ENCODE measurements at regions of chr19 and their contacts with region 1.

Region 1: GRCh38 chr19:57240311-57241090 is at the start of gene ZNF805:
- DNase-seq: peak; percentile 82 to 96 (median 93)
- ATAC-seq: peak; percentile 97
- H3K4me3 ChIP-seq: peak within 1 kb of the TSS; percentile 73
- H3K4me3 Mint-ChIP-seq: peak within 1 kb of the TSS; percentile 88 to 97 (median 94)
- H3K27ac ChIP-seq: peak within 1 kb of the TSS; percentile 95
- H3K27ac Mint-ChIP-seq: peak within 1 kb of the TSS; percentile 96 to 99 (median 97)
- H3K4me1 ChIP-seq: peaks cover 19% of the 10 kb centered on the region in 2 donors
- H3K4me1 Mint-ChIP-seq: peaks cover 20 to 44% (median 36%) of the 10 kb centered on the region in 7 donors
- H3K27me3 ChIP-seq: no peaks in the 10 kb centered on the region
- H3K27me3 Mint-ChIP-seq: peaks cover 0 to 3% (median 0%) of the 10 kb centered on the region in 5 donors
- total RNA-seq, gene ZNF805: 12.0 to 26.2 (median 23.7) TPM

Region 2: DNA sequence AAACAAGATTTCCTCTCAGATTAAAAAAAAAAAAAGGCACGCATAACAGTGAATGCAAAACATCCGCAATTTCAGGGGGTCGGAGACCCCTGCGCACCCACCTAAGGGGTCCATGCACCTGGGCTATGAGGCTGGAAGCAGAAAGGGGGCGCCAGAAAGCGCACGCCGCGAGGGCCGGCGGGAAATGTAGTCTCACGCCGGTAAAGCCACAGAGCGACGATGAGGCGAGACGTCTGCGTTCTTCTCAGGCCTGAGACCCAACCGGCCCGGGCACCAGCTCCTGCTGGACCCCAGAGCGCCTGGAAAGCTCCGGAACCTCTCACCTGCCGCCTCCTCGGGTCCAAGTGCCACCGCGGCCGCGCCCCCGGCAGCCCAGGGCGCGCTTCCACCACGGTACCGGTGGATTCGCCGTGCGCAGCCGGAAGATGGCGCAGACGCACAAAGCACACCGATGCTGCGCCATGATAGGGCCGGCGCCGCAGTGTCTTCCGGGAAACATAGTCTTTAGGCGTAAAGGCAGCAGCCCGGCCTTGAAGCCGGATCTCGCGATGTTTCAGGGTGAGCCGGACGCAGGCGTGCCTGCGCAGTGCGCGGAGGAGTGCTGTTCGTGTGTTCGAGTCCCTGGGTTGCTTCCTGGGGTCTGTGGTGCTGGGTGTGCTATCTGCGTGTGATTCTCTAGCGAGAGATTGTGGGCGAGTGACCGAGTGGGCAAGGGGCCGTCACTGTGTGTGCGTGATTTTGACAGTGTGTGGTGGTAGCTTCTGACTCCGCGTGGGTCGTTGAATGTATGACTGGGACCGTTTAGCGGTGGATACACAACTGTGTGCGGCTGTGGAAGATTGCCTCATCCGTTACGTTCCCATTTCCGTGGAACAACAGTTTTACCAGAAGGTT is 847.1 kb before region 1 on chr19 and contains the start of gene ZNF582:
- CTCF ChIA-PET with region 1: no interaction called
- POLR2A ChIA-PET with region 1: no interaction called
- intact Hi-C with region 1: loop called in 1 of 2 experiments (anchors 1 kb)
- DNase-seq: peak; percentile 79 to 94 (median 90)
- ATAC-seq: peak; percentile 98
- H3K4me3 ChIP-seq: peak within 1 kb of the TSS; percentile 90
- H3K4me3 Mint-ChIP-seq: peak within 1 kb of the TSS; percentile 89 to 99 (median 98)
- H3K27ac ChIP-seq: peak within 1 kb of the TSS; percentile 92
- H3K27ac Mint-ChIP-seq: peak within 1 kb of the TSS; percentile 91 to 99 (median 96)
- H3K4me1 ChIP-seq: peaks cover 3 to 5% of the 10 kb centered on the region in 2 donors
- H3K4me1 Mint-ChIP-seq: peaks cover 3 to 32% (median 10%) of the 10 kb centered on the region in 7 donors
- H3K27me3 ChIP-seq: no peaks in the 10 kb centered on the region
- H3K27me3 Mint-ChIP-seq: no peaks in the 10 kb centered on the region
- total RNA-seq, gene ZNF582: 1.7 to 7.6 (median 3.3) TPM

Region 3: GRCh38 chr19:57279418-57280066 is 39.0 kb after region 1 on chr19:
- CTCF ChIA-PET with region 1: no interaction called
- POLR2A ChIA-PET with region 1: interaction called, 10 read pairs
- intact Hi-C with region 1: loop called (anchors 1 kb)
- DNase-seq: peak in 6 of 9 donors; percentile 60 to 81 (median 78)
- ATAC-seq: peak; percentile 85
- H3K4me3 ChIP-seq: peak overlapping the region; percentile 80
- H3K4me3 Mint-ChIP-seq: no peak overlapping the region
- H3K27ac ChIP-seq: peak overlapping the region; percentile 98
- H3K27ac Mint-ChIP-seq: peak overlapping the region in 2 of 9 donors; percentile 6 to 51
- H3K4me1 ChIP-seq: peaks cover 18 to 23% of the 10 kb centered on the region in 2 donors
- H3K4me1 Mint-ChIP-seq: peaks cover 7 to 33% (median 25%) of the 10 kb centered on the region in 7 donors
- H3K27me3 ChIP-seq: no peaks in the 10 kb centered on the region
- H3K27me3 Mint-ChIP-seq: no peaks in the 10 kb centered on the region

Region 4: GRCh38 chr19:57357406-57357805 is 116.9 kb after region 1 on chr19:
- CTCF ChIA-PET with region 1: no interaction called
- POLR2A ChIA-PET with region 1: no interaction called
- intact Hi-C with region 1: no loop called
- DNase-seq: no peak
- ATAC-seq: no peak
- H3K4me3 ChIP-seq: no peak overlapping the region
- H3K4me3 Mint-ChIP-seq: no peak overlapping the region
- H3K27ac ChIP-seq: no peak overlapping the region
- H3K27ac Mint-ChIP-seq: no peak overlapping the region
- H3K4me1 ChIP-seq: peaks cover 0 to 1% of the 10 kb centered on the region in 2 donors
- H3K4me1 Mint-ChIP-seq: peaks cover 10 to 22% (median 13%) of the 10 kb centered on the region in 7 donors
- H3K27me3 ChIP-seq: no peaks in the 10 kb centered on the region
- H3K27me3 Mint-ChIP-seq: no peaks in the 10 kb centered on the region

Region 5: GRCh38 chr19:57389730-57390598 is 149.5 kb after region 1 on chr19 and contains the start of gene ZNF548:
- CTCF ChIA-PET with region 1: no interaction called
- POLR2A ChIA-PET with region 1: interaction called, 3 read pairs
- intact Hi-C with region 1: loop called (anchors 1 kb)
- DNase-seq: peak; percentile 85 to 99 (median 92)
- ATAC-seq: peak; percentile 98
- H3K4me3 ChIP-seq: peak within 1 kb of the TSS; percentile 72
- H3K4me3 Mint-ChIP-seq: peak within 1 kb of the TSS; percentile 89 to 100 (median 97)
- H3K27ac ChIP-seq: peak within 1 kb of the TSS; percentile 93
- H3K27ac Mint-ChIP-seq: peak within 1 kb of the TSS; percentile 91 to 100 (median 97)
- H3K4me1 ChIP-seq: peaks cover 13 to 15% of the 10 kb centered on the region in 2 donors
- H3K4me1 Mint-ChIP-seq: peaks cover 11 to 45% (median 29%) of the 10 kb centered on the region in 7 donors
- H3K27me3 ChIP-seq: no peaks in the 10 kb centered on the region
- H3K27me3 Mint-ChIP-seq: no peaks in the 10 kb centered on the region
- total RNA-seq, gene ZNF548: 26.4 to 115 (median 66.9) TPM

Region 6: GRCh38 chr19:57583521-57584416 is 343.3 kb after region 1 on chr19 and contains the start of gene ZIK1:
- CTCF ChIA-PET with region 1: no interaction called
- POLR2A ChIA-PET with region 1: no interaction called
- intact Hi-C with region 1: loop called in 1 of 2 experiments (anchors 5 kb)
- DNase-seq: peak; percentile 61 to 91 (median 85)
- ATAC-seq: peak; percentile 93
- H3K4me3 ChIP-seq: peak within 1 kb of the TSS; percentile 55
- H3K4me3 Mint-ChIP-seq: peak within 1 kb of the TSS; percentile 89 to 99 (median 94)
- H3K27ac ChIP-seq: peak within 1 kb of the TSS; percentile 45
- H3K27ac Mint-ChIP-seq: peak within 1 kb of the TSS; percentile 76 to 95 (median 90)
- H3K4me1 ChIP-seq: peaks cover 10 to 12% of the 10 kb centered on the region in 2 donors
- H3K4me1 Mint-ChIP-seq: peaks cover 12 to 28% (median 24%) of the 10 kb centered on the region in 7 donors
- H3K27me3 ChIP-seq: no peaks in the 10 kb centered on the region
- H3K27me3 Mint-ChIP-seq: no peaks in the 10 kb centered on the region
- total RNA-seq, gene ZIK1: 4.8 to 14.1 (median 7.0) TPM

Region 7: DNA sequence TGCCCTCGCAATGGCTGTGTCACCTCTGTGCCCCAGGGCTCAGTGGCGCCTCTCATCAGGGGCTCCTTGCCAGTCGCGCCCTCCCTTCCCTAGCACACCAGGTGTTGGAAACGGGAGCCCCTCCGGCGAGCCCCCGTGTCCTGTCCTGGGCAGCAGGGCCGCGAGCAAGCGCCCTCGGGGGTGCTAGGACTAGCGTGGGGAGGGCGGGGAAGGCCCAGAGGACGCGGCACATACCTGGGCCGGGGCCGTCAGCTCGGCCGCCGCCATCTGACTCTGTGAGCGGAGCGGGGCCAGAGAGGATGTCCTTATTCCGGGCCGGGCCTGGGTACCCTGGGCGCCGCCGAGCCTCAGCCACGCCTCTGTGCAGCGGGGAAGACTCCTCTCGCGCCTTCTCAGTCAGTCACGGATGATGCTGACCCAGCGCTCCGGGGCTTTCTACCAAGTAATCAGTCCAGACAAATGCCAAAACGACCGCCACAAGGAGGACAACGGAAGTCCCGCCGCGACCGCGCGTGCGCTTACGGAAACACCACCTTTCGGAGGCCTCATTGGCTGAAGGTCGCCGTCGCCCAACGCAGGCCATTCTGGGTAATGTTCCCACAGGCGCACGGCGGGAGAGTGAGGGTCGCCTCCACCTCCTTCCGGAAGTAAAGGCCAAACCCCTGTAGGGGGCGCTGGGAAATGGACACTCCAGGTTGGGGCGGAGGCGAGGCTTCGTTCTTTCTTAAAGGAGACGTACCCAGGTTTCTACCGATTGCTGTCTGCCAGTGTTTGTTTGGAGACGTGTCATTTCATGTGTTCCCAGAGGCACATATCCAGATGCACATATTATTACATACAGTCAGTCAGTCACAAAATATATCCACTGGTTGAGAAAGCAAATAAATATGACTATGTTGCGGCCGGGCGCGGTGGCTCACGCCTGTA is 707.0 kb after region 1 on chr19 and contains the start of gene ZNF256:
- CTCF ChIA-PET with region 1: no interaction called
- POLR2A ChIA-PET with region 1: no interaction called
- intact Hi-C with region 1: loop called in 1 of 2 experiments (anchors 1 kb)
- DNase-seq: peak; percentile 55 to 85 (median 77)
- ATAC-seq: peak; percentile 97
- H3K4me3 ChIP-seq: peak within 1 kb of the TSS; percentile 71
- H3K4me3 Mint-ChIP-seq: peak within 1 kb of the TSS; percentile 89 to 97 (median 95)
- H3K27ac ChIP-seq: peak within 1 kb of the TSS; percentile 80
- H3K27ac Mint-ChIP-seq: peak within 1 kb of the TSS; percentile 83 to 97 (median 92)
- H3K4me1 ChIP-seq: peaks cover 6 to 9% of the 10 kb centered on the region in 2 donors
- H3K4me1 Mint-ChIP-seq: peaks cover 10 to 28% (median 21%) of the 10 kb centered on the region in 7 donors
- H3K27me3 ChIP-seq: no peaks in the 10 kb centered on the region
- H3K27me3 Mint-ChIP-seq: peaks cover 0 to 4% (median 0%) of the 10 kb centered on the region in 5 donors
- total RNA-seq, gene ZNF256: 5.2 to 13.8 (median 11.8) TPM

Region 8: GRCh38 chr19:58451358-58452101 is 1211.0 kb after region 1 on chr19 and contains the start of gene ZNF324B:
- CTCF ChIA-PET with region 1: no interaction called
- POLR2A ChIA-PET with region 1: no interaction called
- intact Hi-C with region 1: loop called in 1 of 2 experiments (anchors 5 kb)
- DNase-seq: peak; percentile 90 to 97 (median 94)
- ATAC-seq: peak; percentile 99
- H3K4me3 ChIP-seq: peak within 1 kb of the TSS; percentile 63
- H3K4me3 Mint-ChIP-seq: peak within 1 kb of the TSS; percentile 85 to 98 (median 88)
- H3K27ac ChIP-seq: peak within 1 kb of the TSS; percentile 81
- H3K27ac Mint-ChIP-seq: peak within 1 kb of the TSS in 8 of 9 donors; percentile 2 to 90 (median 71)
- H3K4me1 ChIP-seq: peaks cover 0 to 4% of the 10 kb centered on the region in 2 donors
- H3K4me1 Mint-ChIP-seq: peaks cover 12 to 23% (median 19%) of the 10 kb centered on the region in 7 donors
- H3K27me3 ChIP-seq: no peaks in the 10 kb centered on the region
- H3K27me3 Mint-ChIP-seq: peaks cover 8 to 26% (median 17%) of the 10 kb centered on the region in 5 donors
- total RNA-seq, gene ZNF324B: 9.1 to 13.9 (median 11.8) TPM

Measured in naive thymus-derived CD4-positive, alpha-beta T cell (primary cell).